CD8-positive, alpha-beta T cell (primary cell): ENCODE measurements at regions of chr1 and their contacts with region 1.

Region 1: DNA sequence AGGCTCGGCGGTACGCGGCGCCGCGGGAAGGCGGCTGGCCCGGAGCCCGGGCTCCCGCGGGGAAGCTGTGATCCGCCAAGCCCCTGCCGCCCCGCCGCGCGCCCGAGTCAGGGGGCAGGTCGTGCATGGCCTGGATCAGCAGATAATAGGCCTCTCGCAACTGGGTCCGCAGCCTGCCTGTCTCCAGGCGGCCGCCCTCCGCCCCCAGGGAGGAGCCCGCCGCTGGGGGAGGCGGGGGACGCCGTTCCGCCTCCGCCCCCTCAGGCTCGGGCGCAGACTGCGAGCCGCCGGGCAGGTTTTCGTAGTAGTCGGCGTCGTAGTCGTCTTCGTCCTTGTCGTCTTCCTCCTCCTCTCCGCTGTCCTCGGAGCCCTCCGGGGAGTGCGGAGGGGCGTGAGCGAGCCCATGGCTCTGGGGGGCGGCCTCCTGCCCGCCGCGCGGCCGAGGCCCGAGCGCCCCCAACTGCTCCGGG is at the start of gene SYDE2:
- DNase-seq: peak; percentile 70 to 91 (median 79)
- ATAC-seq: peak; percentile 83
- H3K4me3 ChIP-seq: peak within 1 kb of the TSS; percentile 68 to 94
- H3K4me3 Mint-ChIP-seq: peak within 1 kb of the TSS; percentile 100
- H3K27ac ChIP-seq: peak within 1 kb of the TSS; percentile 63 to 94
- H3K27ac Mint-ChIP-seq: peak within 1 kb of the TSS; percentile 100
- H3K4me1 ChIP-seq: peaks cover 27% of the 10 kb centered on the region
- H3K4me1 Mint-ChIP-seq: peaks cover 48% of the 10 kb centered on the region
- H3K27me3 ChIP-seq: peaks cover 0 to 5% of the 10 kb centered on the region in 2 experiments
- H3K27me3 Mint-ChIP-seq: peaks cover 4% of the 10 kb centered on the region
- CTCF ChIP-seq: no peak
- total RNA-seq, gene SYDE2: 6.2 to 6.4 TPM

Region 2: DNA sequence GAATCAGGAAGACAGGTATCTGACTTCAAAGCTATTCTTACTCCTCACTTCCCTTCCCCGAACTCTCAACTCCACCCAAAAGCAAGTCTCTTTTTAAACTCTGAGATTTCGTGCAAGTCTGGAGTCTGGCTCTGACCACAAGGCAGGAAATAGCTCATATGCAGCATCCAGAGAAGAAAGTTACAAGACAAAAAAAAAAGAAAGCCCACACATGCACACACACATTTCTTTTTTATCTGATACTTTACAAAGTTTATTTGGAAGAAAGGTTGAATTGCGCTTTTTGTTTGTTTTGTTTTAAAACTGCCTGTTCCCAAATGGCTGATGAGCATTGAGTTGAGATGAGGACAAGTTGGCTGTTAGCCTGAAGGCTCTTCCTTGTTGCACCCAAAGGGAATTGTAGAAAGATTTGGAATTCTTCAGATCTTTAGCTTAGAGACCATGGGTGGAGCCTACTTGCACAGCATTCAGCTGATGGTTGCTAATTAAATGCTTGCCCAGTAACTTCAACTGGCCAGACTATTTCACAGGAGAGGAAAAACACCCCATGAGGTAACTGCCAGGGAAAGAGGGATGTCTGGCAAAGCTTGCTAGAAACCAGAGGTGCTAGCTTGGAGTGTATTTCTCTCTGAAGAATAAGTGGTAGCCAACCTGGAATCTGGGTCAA is 1692.3 kb before region 1 on chr1:
- CTCF ChIA-PET with region 1: no interaction called
- POLR2A ChIA-PET with region 1: no interaction called
- intact Hi-C with region 1: loop called in 1 of 2 experiments (anchors 10 kb)
- DNase-seq: peak in 8 of 9 experiments; percentile 1 to 84 (median 39)
- ATAC-seq: peak; percentile 92
- H3K4me3 ChIP-seq: peak overlapping the region in 1 of 2 experiments; percentile 7
- H3K4me3 Mint-ChIP-seq: peak overlapping the region; percentile 73
- H3K27ac ChIP-seq: peak overlapping the region in 1 of 2 experiments; percentile 47
- H3K27ac Mint-ChIP-seq: peak overlapping the region; percentile 91
- H3K4me1 ChIP-seq: peaks cover 24% of the 10 kb centered on the region
- H3K4me1 Mint-ChIP-seq: peaks cover 30% of the 10 kb centered on the region
- H3K27me3 ChIP-seq: no peaks in the 10 kb centered on the region
- H3K27me3 Mint-ChIP-seq: no peaks in the 10 kb centered on the region
- CTCF ChIP-seq: no peak

Region 3: DNA sequence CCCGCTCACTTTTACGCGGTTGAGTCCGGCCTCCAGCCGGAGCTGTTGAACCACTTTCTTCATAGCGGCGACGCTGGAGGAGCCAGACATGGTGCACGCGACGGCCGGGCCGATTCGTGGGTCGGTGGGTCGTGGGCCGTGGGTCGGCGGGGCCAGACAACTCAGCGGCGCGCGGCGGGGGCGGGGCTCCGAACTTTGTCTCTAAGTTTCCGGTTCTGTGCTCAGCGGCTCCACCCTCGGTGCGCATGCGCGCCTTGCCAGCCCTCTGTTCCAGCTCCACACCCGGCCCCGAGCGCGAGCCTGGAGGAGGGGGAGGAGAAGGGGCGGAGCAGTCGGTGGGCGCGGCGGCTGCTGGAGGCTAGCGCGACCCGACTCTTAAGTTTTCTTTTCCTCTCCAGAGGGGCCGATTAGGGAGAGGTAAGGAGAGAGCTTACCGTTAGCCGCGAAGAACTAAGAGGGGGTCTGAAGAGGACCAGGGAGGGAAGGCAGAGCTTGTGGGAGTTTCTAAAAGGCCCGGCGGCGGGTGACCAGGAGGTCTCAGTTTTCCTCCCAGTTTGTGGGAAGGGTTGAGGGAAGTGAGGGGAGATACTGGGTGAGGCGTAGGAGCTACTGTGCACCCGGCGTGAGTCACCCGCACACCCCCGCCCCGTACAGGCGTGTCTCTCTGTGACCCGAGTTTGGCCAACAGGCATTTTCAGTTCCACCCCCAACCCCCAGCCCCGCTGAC is 694.7 kb before region 1 on chr1 and contains the starts of genes GNG5 and SPATA1:
- CTCF ChIA-PET with region 1: no interaction called
- POLR2A ChIA-PET with region 1: no interaction called
- intact Hi-C with region 1: loop called in 1 of 2 experiments (anchors 2 kb)
- DNase-seq: peak; percentile 91 to 98 (median 98)
- ATAC-seq: peak; percentile 89
- H3K4me3 ChIP-seq: peak within 1 kb of the TSS; percentile 87 to 95
- H3K4me3 Mint-ChIP-seq: peak within 1 kb of the TSS; percentile 94
- H3K27ac ChIP-seq: peak within 1 kb of the TSS; percentile 75 to 88
- H3K27ac Mint-ChIP-seq: peak within 1 kb of the TSS; percentile 96
- H3K4me1 ChIP-seq: peaks cover 40% of the 10 kb centered on the region
- H3K4me1 Mint-ChIP-seq: peaks cover 45% of the 10 kb centered on the region
- H3K27me3 ChIP-seq: no peaks in the 10 kb centered on the region
- H3K27me3 Mint-ChIP-seq: no peaks in the 10 kb centered on the region
- CTCF ChIP-seq: no peak
- total RNA-seq, gene GNG5: 19.5 TPM
- total RNA-seq, gene SPATA1: 0.52 to 0.94 TPM

Region 4: GRCh38 chr1:85048296-85049064 is 152.4 kb before region 1 on chr1 and contains the start of gene MCOLN3:
- CTCF ChIA-PET with region 1: no interaction called
- POLR2A ChIA-PET with region 1: interaction called, 3 read pairs
- intact Hi-C with region 1: loop called in 1 of 2 experiments (anchors 5 kb)
- DNase-seq: peak in 7 of 9 experiments; percentile 23 to 57 (median 34)
- ATAC-seq: peak; percentile 66
- H3K4me3 ChIP-seq: peak within 1 kb of the TSS; percentile 41 to 50
- H3K4me3 Mint-ChIP-seq: peak within 1 kb of the TSS; percentile 80
- H3K27ac ChIP-seq: no peak within 1 kb of the TSS
- H3K27ac Mint-ChIP-seq: no peak within 1 kb of the TSS
- H3K4me1 ChIP-seq: peaks cover 21% of the 10 kb centered on the region
- H3K4me1 Mint-ChIP-seq: peaks cover 31% of the 10 kb centered on the region
- H3K27me3 ChIP-seq: peaks cover 12 to 27% of the 10 kb centered on the region in 2 experiments
- H3K27me3 Mint-ChIP-seq: peaks cover 40% of the 10 kb centered on the region
- CTCF ChIP-seq: no peak
- total RNA-seq, gene MCOLN3: 0.11 to 0.14 TPM

Region 5: GRCh38 chr1:85179522-85179921 is 21.4 kb before region 1 on chr1:
- CTCF ChIA-PET with region 1: no interaction called
- POLR2A ChIA-PET with region 1: interaction called, 4 read pairs
- intact Hi-C with region 1: loop called (anchors 1 to 2 kb)
- DNase-seq: peak in 2 of 9 experiments; percentile 48 to 68
- ATAC-seq: peak; percentile 95
- H3K4me3 ChIP-seq: peak overlapping the region in 1 of 2 experiments; percentile 3
- H3K4me3 Mint-ChIP-seq: peak overlapping the region; percentile 55
- H3K27ac ChIP-seq: no peak overlapping the region
- H3K27ac Mint-ChIP-seq: no peak overlapping the region
- H3K4me1 ChIP-seq: peaks cover 11% of the 10 kb centered on the region
- H3K4me1 Mint-ChIP-seq: peaks cover 19% of the 10 kb centered on the region
- H3K27me3 ChIP-seq: no peaks in the 10 kb centered on the region
- H3K27me3 Mint-ChIP-seq: no peaks in the 10 kb centered on the region
- CTCF ChIP-seq: no peak

Region 6: GRCh38 chr1:85259118-85259911 is 58.4 kb after region 1 on chr1 and contains the start of gene C1orf52:
- CTCF ChIA-PET with region 1: interaction called, 24 read pairs
- POLR2A ChIA-PET with region 1: interaction called, 12 read pairs
- intact Hi-C with region 1: loop called (anchors 1 to 2 kb)
- DNase-seq: peak; percentile 86 to 99 (median 98)
- ATAC-seq: peak; percentile 96
- H3K4me3 ChIP-seq: peak within 1 kb of the TSS; percentile 65 to 93
- H3K4me3 Mint-ChIP-seq: peak within 1 kb of the TSS; percentile 97
- H3K27ac ChIP-seq: peak within 1 kb of the TSS; percentile 78 to 88
- H3K27ac Mint-ChIP-seq: peak within 1 kb of the TSS; percentile 95
- H3K4me1 ChIP-seq: peaks cover 24% of the 10 kb centered on the region
- H3K4me1 Mint-ChIP-seq: peaks cover 36% of the 10 kb centered on the region
- H3K27me3 ChIP-seq: no peaks in the 10 kb centered on the region
- H3K27me3 Mint-ChIP-seq: no peaks in the 10 kb centered on the region
- CTCF ChIP-seq: peak; percentile 99
- total RNA-seq, gene C1orf52: 70.7 to 74.4 TPM

Region 7: GRCh38 chr1:85289207-85289847 is 88.4 kb after region 1 on chr1:
- CTCF ChIA-PET with region 1: no interaction called
- POLR2A ChIA-PET with region 1: no interaction called
- intact Hi-C with region 1: no loop called
- DNase-seq: no peak
- ATAC-seq: no peak
- H3K4me3 ChIP-seq: no peak overlapping the region
- H3K4me3 Mint-ChIP-seq: no peak overlapping the region
- H3K27ac ChIP-seq: no peak overlapping the region
- H3K27ac Mint-ChIP-seq: no peak overlapping the region
- H3K4me1 ChIP-seq: no peaks in the 10 kb centered on the region
- H3K4me1 Mint-ChIP-seq: no peaks in the 10 kb centered on the region
- H3K27me3 ChIP-seq: no peaks in the 10 kb centered on the region
- H3K27me3 Mint-ChIP-seq: no peaks in the 10 kb centered on the region
- CTCF ChIP-seq: no peak